GM12878 (cell line): ENCODE measurements at regions of chr3 and their contacts with region 1.

Region 1: DNA sequence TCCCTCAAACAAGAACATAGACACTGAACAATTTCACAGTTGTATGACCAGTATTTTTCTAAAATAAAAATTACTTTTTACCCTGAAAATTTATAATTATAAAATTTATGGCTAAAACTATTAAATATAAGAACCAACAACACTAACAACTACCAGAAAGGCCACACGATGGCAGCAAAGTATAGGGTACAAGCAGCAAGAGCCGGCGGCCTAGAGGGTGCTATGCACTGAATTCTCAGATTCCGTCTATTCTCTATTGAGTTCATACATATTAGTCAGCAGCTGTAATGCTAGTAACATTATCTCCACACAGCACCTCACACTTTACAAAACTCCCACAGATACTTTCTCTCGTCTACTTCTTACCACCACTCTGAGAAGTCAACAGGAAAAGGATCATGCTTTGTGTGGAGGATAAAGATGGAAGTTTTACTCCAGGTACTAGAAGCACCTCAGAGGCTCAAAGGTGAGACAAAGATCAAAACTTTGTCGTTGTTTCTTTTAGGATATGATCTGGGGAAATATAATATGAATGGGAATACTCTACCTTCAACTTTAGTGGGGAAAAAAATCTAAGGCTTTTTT is 160.5 kb downstream of the FGF12 start:
- DNase-seq: peak; percentile 9
- ATAC-seq: peak; percentile 95
- H3K4me3 ChIP-seq: no peak overlapping the region
- H3K27ac ChIP-seq: no peak overlapping the region
- H3K4me1 ChIP-seq: no peaks in the 10 kb centered on the region; the same call in 1 of the 2 replicates
- H3K27me3 ChIP-seq: no peaks in the 10 kb centered on the region; a peak in 1 of 4 replicates
- CTCF ChIP-seq: peak; percentile 51 to 81 (median 56); a peak in 5 of 6 replicates
- EP300 ChIP-seq: no peak
- POLR2A ChIP-seq: no peak
- RAD21 ChIP-seq: peak; percentile 93

Region 2: GRCh38 chr3:192772240-192772894 is 205.6 kb after region 1 on chr3:
- CTCF ChIA-PET with region 1: no interaction called
- POLR2A ChIA-PET with region 1: no interaction called
- RAD21 ChIA-PET with region 1: no interaction called
- SMC1A ChIA-PET with region 1: no interaction called
- in situ Hi-C with region 1: no loop called
- intact Hi-C with region 1: loop called (anchors 2 kb)
- DNase-seq: no peak
- ATAC-seq: peak; percentile 71
- H3K4me3 ChIP-seq: no peak overlapping the region
- H3K27ac ChIP-seq: no peak overlapping the region
- H3K4me1 ChIP-seq: no peaks in the 10 kb centered on the region
- H3K27me3 ChIP-seq: no peaks in the 10 kb centered on the region
- CTCF ChIP-seq: peak; percentile 26 to 43 (median 35); a peak in 4 of 6 replicates
- EP300 ChIP-seq: no peak
- POLR2A ChIP-seq: no peak
- RAD21 ChIP-seq: peak; percentile 41

Region 3: DNA sequence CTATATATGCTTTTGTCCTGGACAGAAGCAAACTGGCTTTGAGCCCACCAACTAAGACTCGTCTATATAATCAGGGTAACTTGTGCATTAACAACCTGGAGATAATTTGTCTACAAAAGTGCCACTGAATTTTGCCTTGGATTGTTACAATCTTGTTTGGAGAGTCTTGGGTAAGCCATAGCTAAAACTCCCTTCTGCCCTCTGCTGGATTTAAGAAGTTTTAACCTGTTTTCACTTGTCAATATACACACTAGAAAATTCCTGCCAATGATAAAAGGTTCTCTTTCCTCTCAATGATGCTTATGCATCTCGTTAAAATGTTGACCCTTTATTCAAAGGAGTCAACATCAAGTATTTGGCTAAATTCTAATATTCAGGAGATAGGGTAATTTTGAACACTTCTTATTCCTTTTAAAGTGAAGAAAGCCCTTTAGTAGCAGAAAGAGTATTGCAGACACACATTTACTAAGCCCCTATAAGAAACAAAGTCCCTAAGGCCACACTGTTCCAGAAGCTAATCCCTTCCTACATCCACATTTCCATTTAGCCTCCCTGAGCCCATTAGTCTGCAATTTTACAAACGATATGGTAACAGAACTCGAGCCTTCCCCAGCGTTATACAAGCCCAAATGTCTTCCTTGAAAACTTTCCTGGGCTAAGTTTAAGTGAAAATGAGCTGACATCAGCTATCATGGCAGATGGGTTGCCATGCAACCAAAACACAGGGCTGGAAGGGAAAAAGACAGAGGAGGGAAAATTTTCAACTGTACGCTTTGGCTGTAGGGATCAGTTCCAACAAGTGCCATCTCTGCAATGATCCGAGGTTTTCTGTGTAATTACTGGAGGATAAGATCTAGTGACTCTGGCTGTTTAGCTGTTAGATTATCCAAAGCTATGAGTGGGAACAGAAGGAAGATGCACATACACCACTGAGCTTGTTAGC is 236.4 kb after region 1 on chr3:
- CTCF ChIA-PET with region 1: interaction called, 5 read pairs
- POLR2A ChIA-PET with region 1: interaction called, 4 read pairs
- RAD21 ChIA-PET with region 1: no interaction called
- SMC1A ChIA-PET with region 1: no interaction called
- in situ Hi-C with region 1: loop called (anchors 5 kb)
- intact Hi-C with region 1: loop called (anchors 1 kb)
- DNase-seq: no peak
- ATAC-seq: peak; percentile 87
- H3K4me3 ChIP-seq: no peak overlapping the region
- H3K27ac ChIP-seq: no peak overlapping the region
- H3K4me1 ChIP-seq: no peaks in the 10 kb centered on the region
- H3K27me3 ChIP-seq: no peaks in the 10 kb centered on the region
- CTCF ChIP-seq: peak; percentile 47 to 50 (median 47)
- EP300 ChIP-seq: no peak
- POLR2A ChIP-seq: no peak
- RAD21 ChIP-seq: peak; percentile 34; the same call in 1 of the 2 replicates

Region 4: DNA sequence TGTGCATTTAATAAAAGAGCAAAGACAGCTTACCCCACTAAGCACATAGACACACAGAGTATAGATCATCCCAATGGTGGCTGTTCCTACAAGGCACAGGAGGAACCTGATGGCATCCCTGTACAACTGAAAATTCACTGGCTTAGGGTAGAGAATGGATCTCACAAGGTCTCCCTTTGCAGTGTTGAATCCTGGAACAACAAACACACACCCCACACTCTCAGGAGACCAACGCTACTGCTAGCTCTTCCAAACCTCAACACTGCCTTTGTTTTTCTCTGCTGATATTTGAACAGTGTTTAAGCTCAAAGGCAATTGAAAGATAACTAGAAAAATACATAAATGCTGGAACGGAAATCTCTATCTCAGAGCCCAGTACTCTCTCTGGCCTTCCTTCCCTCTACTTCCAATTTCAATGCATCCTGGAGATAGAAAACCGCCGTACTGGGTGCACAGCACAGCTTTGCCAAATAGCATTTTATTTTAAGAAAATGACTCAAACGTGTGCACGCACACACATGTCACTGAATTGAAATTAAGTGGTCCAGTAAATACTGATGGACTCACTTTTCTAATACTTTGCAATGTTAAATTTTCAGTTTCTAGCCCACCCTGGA is 899.3 kb after region 1 on chr3:
- CTCF ChIA-PET with region 1: no interaction called
- POLR2A ChIA-PET with region 1: no interaction called
- RAD21 ChIA-PET with region 1: no interaction called
- SMC1A ChIA-PET with region 1: no interaction called
- in situ Hi-C with region 1: no loop called
- intact Hi-C with region 1: loop called (anchors 5 kb)
- DNase-seq: no peak
- ATAC-seq: no peak
- H3K4me3 ChIP-seq: no peak overlapping the region
- H3K27ac ChIP-seq: no peak overlapping the region
- H3K4me1 ChIP-seq: no peaks in the 10 kb centered on the region
- H3K27me3 ChIP-seq: no peaks in the 10 kb centered on the region
- CTCF ChIP-seq: no peak
- EP300 ChIP-seq: no peak
- POLR2A ChIP-seq: no peak
- RAD21 ChIP-seq: no peak